ENCODE measurements at regions of chr2 and their contacts with region 1.

Region 1: DNA sequence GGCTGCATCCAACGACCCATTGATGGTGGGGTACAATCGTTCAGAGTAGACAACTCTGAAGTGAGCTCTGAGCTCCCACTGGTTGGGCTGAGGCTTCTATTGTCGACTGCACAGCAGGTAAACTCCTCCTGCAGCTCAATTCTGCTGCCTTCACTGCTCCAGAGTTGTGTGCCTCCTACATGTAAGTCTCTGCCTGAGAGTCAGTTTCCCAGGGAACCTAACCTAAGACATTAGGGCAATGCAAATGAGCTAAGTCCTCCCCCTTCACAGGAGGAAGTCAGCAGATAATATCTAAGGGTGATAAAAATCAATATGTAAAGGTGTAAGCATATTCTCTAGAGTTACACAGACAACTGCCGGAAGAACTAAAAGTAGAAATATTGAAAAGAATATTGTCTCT is 22.5 kb upstream of the ACYP2 start:
- DNase-seq: no peak
- ATAC-seq: peak; percentile 74
- H3K4me3 ChIP-seq: no peak overlapping the region
- H3K27ac ChIP-seq: peak overlapping the region; percentile 16; the same call in 1 of the 2 replicates
- H3K4me1 ChIP-seq: peaks cover 20% of the 10 kb centered on the region
- H3K27me3 ChIP-seq: no peaks in the 10 kb centered on the region
- CTCF ChIP-seq: no peak
- EP300 ChIP-seq: no peak
- POLR2A ChIP-seq: no peak
- RAD21 ChIP-seq: no peak

Region 2: GRCh38 chr2:54081574-54081973 is 11.4 kb before region 1 on chr2:
- CTCF ChIA-PET with region 1: interaction called, 10 read pairs
- POLR2A ChIA-PET with region 1: interaction called, 4 read pairs
- RAD21 ChIA-PET with region 1: no interaction called
- SMC1A ChIA-PET with region 1: interaction called, 21 read pairs
- in situ Hi-C with region 1: no loop called
- intact Hi-C with region 1: no loop called
- DNase-seq: peak; percentile 87
- ATAC-seq: peak; percentile 95
- H3K4me3 ChIP-seq: no peak overlapping the region
- H3K27ac ChIP-seq: 0 out of 2 replicates have a peak overlapping the region, but pooled peaks have one; percentile 28
- H3K4me1 ChIP-seq: peaks cover 8% of the 10 kb centered on the region
- H3K27me3 ChIP-seq: peaks cover 0 to 3% of the 10 kb centered on the region in 2 experiments; a peak in 1 of 4 replicates
- CTCF ChIP-seq: no peak
- EP300 ChIP-seq: peak; percentile 98 to 99
- POLR2A ChIP-seq: no peak
- RAD21 ChIP-seq: peak; percentile 26; the same call in 1 of the 2 replicates

Region 3: GRCh38 chr2:54115284-54116137 is 22.6 kb after region 1 on chr2 and contains the start of gene ACYP2:
- CTCF ChIA-PET with region 1: no interaction called
- POLR2A ChIA-PET with region 1: interaction called, 3 read pairs
- RAD21 ChIA-PET with region 1: interaction called, 4 read pairs
- SMC1A ChIA-PET with region 1: interaction called, 4 read pairs
- in situ Hi-C with region 1: no loop called
- intact Hi-C with region 1: loop called (anchors 1 kb)
- DNase-seq: peak; percentile 85
- ATAC-seq: peak; percentile 93
- H3K4me3 ChIP-seq: peak within 1 kb of the TSS; percentile 70
- H3K27ac ChIP-seq: peak within 1 kb of the TSS; percentile 97
- H3K4me1 ChIP-seq: no peaks in the 10 kb centered on the region
- H3K27me3 ChIP-seq: no peaks in the 10 kb centered on the region
- CTCF ChIP-seq: 0 out of 6 replicates have a peak, but pooled peaks of 1 of the 3 experiments have one; percentile 4
- EP300 ChIP-seq: no peak
- POLR2A ChIP-seq: peak; percentile 98
- RAD21 ChIP-seq: no peak
- polyA plus RNA-seq, gene ACYP2: 11.3 to 11.7 TPM